ENCODE measurements at regions of chr12 and their contacts with region 1.

Region 1: DNA sequence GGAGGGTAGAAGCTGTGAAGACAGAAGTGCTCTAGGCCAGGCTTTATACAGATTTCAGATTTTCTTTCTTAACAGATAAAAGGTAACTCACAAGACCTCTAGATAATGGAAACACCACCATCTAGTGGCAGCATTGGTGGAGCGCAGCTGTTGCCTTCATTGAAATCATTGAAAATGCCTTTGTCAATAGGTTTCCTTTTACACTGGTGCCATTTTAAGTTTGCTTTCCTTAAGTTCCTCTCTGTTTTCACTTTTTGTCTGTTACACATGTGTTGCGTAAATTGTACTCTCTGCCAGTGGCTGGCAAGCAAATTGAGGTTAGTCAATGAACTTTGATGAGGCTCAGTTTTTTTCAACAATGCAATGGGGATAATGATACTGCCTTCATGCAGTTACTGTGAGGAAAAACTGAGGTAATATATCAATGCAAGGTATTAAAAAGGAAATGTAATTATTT is 31.1 kb downstream of the ALDH1L2 start:
- DNase-seq: peak; percentile 70
- ATAC-seq: peak; percentile 68 to 83

Region 2: GRCh38 chr12:104339663-104340062 is 713.5 kb before region 1 on chr12:
- intact Hi-C with region 1: no loop called
- DNase-seq: no peak
- ATAC-seq: no peak

Region 3: DNA sequence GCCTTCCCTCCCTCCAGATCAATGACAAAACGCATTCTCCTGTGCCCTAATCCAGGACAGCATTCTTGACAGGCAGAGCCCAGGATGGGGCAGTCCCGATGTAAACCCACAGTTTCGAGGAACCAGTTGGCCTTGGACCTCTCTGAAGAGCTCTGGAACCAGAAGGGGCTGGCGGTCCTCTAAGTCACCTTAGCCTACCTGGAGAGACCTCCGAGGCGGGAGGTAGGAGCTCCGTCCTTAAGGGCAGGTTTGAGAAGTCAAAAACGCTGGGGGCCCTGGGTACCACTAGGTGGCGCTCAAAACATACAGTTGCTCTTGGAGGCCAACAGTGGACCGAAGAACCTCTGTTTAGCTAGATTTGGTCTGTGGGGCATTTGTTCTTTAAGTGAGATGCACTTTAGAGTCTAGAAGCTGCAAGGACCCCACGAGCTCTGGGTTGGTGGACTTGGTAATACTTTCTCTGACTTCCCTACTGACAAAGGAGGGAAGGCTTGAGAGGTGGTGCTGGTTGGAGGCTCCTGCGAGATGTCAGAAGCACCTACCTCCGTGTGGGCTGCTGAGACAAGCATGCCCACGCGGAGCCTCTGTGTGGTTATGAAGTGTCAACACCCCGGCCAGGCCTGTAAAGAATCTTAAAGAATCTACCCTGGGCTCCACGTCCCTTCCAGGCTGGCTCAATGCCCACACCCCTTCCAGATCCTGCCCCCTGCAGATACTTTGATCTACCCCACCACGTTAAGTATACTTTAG is 671.2 kb before region 1 on chr12:
- intact Hi-C with region 1: loop called in 1 of 2 experiments (anchors 2 kb)
- DNase-seq: peak; percentile 76
- ATAC-seq: peak; percentile 89 to 91

Region 4: GRCh38 chr12:105138248-105138647 is 85.1 kb after region 1 on chr12:
- intact Hi-C with region 1: no loop called
- DNase-seq: no peak
- ATAC-seq: no peak

Measured in left cardiac atrium (tissue), 4 donors.